ENCODE measurements at regions of chr4 and their contacts with region 1.

Region 1: DNA sequence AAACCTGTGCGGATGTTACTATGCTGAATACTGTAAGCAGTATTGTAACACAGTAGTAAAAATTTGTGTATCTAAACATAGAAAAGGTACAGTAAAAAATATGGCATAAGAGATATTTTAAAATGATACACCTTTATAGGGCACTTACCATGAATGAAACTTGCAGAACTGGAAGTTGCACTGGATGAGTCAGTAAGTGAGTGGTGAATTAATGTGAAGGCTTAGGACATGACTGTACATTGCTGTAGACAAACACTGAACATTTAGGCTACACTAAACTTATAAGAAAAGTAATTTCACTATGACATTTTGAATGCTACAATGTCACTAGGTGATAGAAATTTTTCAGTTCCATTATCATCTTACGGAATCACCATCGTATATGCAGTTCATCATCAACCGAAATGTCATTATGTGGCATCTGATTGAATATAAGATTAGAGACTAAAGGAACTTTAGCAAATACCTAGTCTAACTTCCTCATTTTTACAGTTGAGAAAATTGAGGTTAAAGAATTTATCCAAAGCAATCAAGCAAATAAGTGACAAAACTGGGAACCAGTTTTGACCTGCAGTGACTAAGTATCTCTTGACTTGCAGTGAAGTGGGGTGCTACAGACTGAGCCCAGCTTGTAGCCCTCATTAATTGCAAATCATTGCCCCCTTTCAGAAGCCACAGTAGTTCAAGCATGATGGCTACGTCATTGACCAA is 55.3 kb downstream of the EGF start:
- DNase-seq: peak in 1 of 3 donors; percentile 60
- ATAC-seq: peak; percentile 90
- H3K4me3 ChIP-seq: no peak overlapping the region
- H3K4me1 ChIP-seq: peaks cover 11% of the 10 kb centered on the region
- CTCF ChIP-seq: no peak

Region 2: GRCh38 chr4:109912706-109913595 is 55.0 kb before region 1 on chr4 and contains the start of gene EGF:
- intact Hi-C with region 1: loop called in 1 of 2 experiments (anchors 2 kb)
- DNase-seq: peak in 1 of 3 donors; percentile 10
- ATAC-seq: peak; percentile 54
- H3K4me3 ChIP-seq: no peak within 1 kb of the TSS
- H3K4me1 ChIP-seq: peaks cover 3% of the 10 kb centered on the region
- CTCF ChIP-seq: no peak
- total RNA-seq, gene EGF: 1.6 to 2.6 (median 2.5) TPM

Region 3: GRCh38 chr4:110049951-110050925 is 82.3 kb after region 1 on chr4:
- intact Hi-C with region 1: no loop called
- DNase-seq: peak in 1 of 3 donors; percentile 72
- ATAC-seq: peak; percentile 61
- H3K4me3 ChIP-seq: no peak overlapping the region
- H3K4me1 ChIP-seq: peaks cover 1% of the 10 kb centered on the region
- CTCF ChIP-seq: peak; percentile 44

Region 4: GRCh38 chr4:110193822-110194761 is 226.1 kb after region 1 on chr4:
- intact Hi-C with region 1: no loop called
- DNase-seq: peak; percentile 79 to 90 (median 86)
- ATAC-seq: peak; percentile 76
- H3K4me3 ChIP-seq: no peak overlapping the region
- H3K4me1 ChIP-seq: peaks cover 21% of the 10 kb centered on the region
- CTCF ChIP-seq: no peak

Measured in mucosa of descending colon (tissue), 3 donors.